Panc1 (cell line): ENCODE measurements at regions of chr16 and their contacts with region 1.

Region 1: DNA sequence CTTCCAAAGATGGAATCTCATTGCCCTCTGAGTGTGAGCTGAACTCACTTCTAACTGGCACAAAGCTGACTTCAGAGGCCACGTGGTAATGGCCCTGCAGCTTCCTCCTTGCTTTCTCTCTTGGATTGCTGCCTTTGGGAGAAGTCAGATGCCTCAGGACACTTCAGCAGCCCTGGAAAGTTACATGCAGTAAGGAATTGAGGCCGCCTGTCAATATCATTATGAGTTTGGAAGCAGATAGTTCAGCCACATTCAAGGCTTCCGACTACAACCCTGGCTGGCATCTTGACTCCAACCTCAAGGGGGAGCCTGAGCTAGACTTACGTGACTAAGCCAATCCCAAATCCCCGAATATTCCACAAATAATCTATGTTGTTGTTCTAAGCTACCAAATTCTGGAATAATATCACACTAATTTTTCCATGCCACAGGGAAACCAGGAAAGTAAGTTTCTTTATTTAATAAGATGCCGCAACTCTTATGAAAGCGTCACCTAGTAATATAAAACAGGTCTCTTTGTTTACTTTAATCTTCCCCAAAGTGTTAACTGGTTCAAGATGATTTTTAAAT is 13.6 kb downstream of the CEP20 start:
- DNase-seq: peak; percentile 71
- ATAC-seq: peak; percentile 96
- H3K4me3 ChIP-seq: no peak overlapping the region
- H3K27ac ChIP-seq: peak overlapping the region; percentile 72
- H3K4me1 ChIP-seq: peaks cover 20% of the 10 kb centered on the region
- H3K27me3 ChIP-seq: no peaks in the 10 kb centered on the region
- CTCF ChIP-seq: peak; percentile 95

Region 2: DNA sequence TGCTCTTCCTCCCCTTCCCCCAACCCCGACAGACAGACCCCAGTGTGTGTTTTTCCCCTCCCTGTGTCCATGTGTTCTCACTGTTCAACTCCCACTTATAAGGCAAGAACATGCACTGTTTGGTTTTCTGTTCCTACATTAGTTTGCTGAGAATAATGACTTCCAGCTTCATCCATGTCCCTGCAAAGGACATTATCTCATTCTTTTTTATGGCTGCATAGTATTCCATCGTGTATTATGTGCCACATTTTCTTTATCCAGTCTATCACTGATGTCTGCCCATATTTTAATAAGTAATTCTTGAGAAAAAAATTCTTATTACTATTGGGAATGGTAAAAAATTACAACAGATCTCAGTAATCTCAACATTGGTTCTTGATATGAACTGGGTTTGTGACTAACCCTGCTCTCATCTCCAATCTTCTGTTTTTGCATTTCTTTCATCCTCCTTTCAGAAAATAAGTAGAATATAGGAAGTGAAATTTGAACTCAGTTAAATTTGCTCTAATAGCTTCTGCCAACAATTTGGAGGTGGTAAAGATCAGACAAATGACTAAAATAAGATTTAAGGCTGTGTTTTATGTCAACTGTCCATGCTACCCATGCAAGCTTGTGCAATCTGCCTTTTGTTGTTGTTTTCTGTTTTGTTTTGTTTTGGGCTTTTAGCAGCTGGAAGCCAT is 243.0 kb before region 1 on chr16:
- CTCF ChIA-PET with region 1: no interaction called
- POLR2A ChIA-PET with region 1: no interaction called
- in situ Hi-C with region 1: no loop called
- intact Hi-C with region 1: no loop called
- DNase-seq: no peak
- ATAC-seq: no peak
- H3K4me3 ChIP-seq: no peak overlapping the region
- H3K27ac ChIP-seq: no peak overlapping the region
- H3K4me1 ChIP-seq: no peaks in the 10 kb centered on the region
- H3K27me3 ChIP-seq: no peaks in the 10 kb centered on the region
- CTCF ChIP-seq: no peak

Region 3: GRCh38 chr16:15888072-15888976 is 13.5 kb after region 1 on chr16 and contains the start of gene CEP20:
- CTCF ChIA-PET with region 1: no interaction called
- POLR2A ChIA-PET with region 1: interaction called, 10 read pairs
- in situ Hi-C with region 1: no loop called
- intact Hi-C with region 1: no loop called
- DNase-seq: peak; percentile 97
- ATAC-seq: peak; percentile 99
- H3K4me3 ChIP-seq: peak within 1 kb of the TSS; percentile 69 to 71
- H3K27ac ChIP-seq: peak within 1 kb of the TSS; percentile 99
- H3K4me1 ChIP-seq: peaks cover 30% of the 10 kb centered on the region
- H3K27me3 ChIP-seq: no peaks in the 10 kb centered on the region
- CTCF ChIP-seq: no peak
- total RNA-seq, gene CEP20: 94.3 TPM

Region 4: GRCh38 chr16:15907863-15908478 is 33.1 kb after region 1 on chr16:
- CTCF ChIA-PET with region 1: no interaction called
- POLR2A ChIA-PET with region 1: interaction called, 12 read pairs
- in situ Hi-C with region 1: no loop called
- intact Hi-C with region 1: no loop called
- DNase-seq: no peak
- ATAC-seq: peak; percentile 79
- H3K4me3 ChIP-seq: no peak overlapping the region
- H3K27ac ChIP-seq: no peak overlapping the region
- H3K4me1 ChIP-seq: no peaks in the 10 kb centered on the region
- H3K27me3 ChIP-seq: no peaks in the 10 kb centered on the region
- CTCF ChIP-seq: no peak

Region 5: GRCh38 chr16:15949210-15950160 is 74.7 kb after region 1 on chr16 and contains the start of gene ABCC1:
- CTCF ChIA-PET with region 1: interaction called, 3 read pairs
- POLR2A ChIA-PET with region 1: interaction called, 13 read pairs
- in situ Hi-C with region 1: no loop called
- intact Hi-C with region 1: no loop called
- DNase-seq: no peak
- ATAC-seq: peak; percentile 84
- H3K4me3 ChIP-seq: peak within 1 kb of the TSS; percentile 76 to 77
- H3K27ac ChIP-seq: peak within 1 kb of the TSS; percentile 98
- H3K4me1 ChIP-seq: peaks cover 68% of the 10 kb centered on the region
- H3K27me3 ChIP-seq: no peaks in the 10 kb centered on the region
- CTCF ChIP-seq: no peak
- total RNA-seq, gene ABCC1: 296 TPM

Region 6: DNA sequence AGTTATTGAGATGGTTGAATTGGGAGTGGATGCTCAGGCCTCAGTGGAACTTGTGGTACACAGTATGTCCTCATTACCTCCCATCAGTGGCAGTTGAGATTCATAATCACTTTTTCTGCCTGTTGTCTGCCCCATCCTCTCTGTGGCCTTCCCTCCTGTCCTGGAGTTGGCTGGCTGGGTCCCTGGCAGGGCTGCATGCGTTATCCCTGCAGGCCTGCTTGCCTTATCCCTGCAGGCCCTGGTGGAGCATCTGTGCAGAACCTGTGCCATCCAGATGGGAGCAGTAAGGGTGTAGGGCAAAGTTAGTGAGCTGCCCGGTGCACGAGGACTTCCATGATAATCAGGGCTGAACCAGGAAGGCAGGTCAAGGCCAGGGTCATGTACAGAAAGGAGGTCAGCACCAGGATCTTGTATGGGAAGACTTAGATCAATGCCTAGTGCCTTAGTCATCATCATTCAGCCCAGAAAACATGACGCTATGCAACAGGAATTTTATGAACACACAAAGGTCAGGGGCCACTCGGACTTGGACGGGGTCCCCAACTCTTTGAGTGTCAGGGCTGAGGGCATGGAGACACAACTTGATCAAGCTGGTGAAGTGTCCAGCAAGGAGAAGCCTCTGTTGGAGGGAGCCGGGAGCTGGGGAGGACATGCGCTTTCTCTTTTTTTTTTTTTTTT is 121.7 kb after region 1 on chr16:
- CTCF ChIA-PET with region 1: interaction called, 5 read pairs
- POLR2A ChIA-PET with region 1: no interaction called
- in situ Hi-C with region 1: no loop called
- intact Hi-C with region 1: loop called (anchors 10 kb)
- DNase-seq: peak; percentile 99
- ATAC-seq: peak; percentile 87
- H3K4me3 ChIP-seq: peak overlapping the region in 1 of 2 experiments; percentile 21; a peak in 2 of 4 replicates
- H3K27ac ChIP-seq: peak overlapping the region; percentile 99
- H3K4me1 ChIP-seq: peaks cover 89% of the 10 kb centered on the region
- H3K27me3 ChIP-seq: no peaks in the 10 kb centered on the region
- CTCF ChIP-seq: no peak